ENCODE measurements at regions of chr3 and their contacts with region 1.

Region 1: DNA sequence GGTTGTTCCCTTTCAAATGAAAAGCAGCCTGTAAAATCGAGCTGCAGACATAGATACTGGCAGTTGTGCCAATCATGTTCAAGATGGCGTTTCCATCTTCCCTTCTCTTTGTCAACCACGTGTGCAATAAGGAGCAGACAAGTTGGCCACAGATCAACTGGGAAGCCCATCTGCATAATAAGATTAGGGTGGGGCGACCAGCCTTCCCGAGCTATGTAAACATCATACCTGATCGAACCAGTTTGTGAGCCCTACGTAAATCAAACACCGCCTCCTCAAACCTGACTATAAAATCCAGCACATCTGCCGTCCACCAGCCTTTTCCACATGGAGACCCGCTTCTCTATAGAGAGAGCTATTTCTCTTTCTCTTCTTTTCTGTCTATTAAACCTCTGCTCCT is 37.2 kb downstream of the TRIM42 start:
- DNase-seq: no peak
- H3K4me3 ChIP-seq: no peak overlapping the region
- H3K27ac ChIP-seq: no peak overlapping the region
- H3K4me1 ChIP-seq: peaks cover 3% of the 10 kb centered on the region
- H3K27me3 ChIP-seq: no peaks in the 10 kb centered on the region
- CTCF ChIP-seq: no peak

Region 2: DNA sequence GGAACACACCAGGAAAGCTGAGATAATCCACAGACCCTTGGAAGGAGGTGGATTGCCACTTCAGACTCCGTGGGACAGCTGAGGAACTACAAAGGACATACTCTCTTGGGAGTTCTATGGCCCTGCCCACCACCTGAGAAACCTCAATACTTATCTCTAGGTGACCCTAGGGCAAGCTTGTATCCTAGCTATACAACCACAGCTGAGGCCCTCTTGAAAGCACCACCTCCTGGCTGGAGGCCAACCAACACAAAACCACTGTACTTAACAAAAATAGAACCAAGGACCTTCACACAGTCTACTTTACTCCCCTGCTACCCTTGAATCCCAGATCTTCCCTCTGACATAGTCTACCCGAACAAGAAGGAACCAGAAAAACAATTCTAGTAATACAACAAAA is 97.9 kb before region 1 on chr3:
- CTCF ChIA-PET with region 1: no interaction called
- POLR2A ChIA-PET with region 1: no interaction called
- intact Hi-C with region 1: no loop called
- DNase-seq: no peak
- H3K4me3 ChIP-seq: no peak overlapping the region
- H3K27ac ChIP-seq: no peak overlapping the region
- H3K4me1 ChIP-seq: no peaks in the 10 kb centered on the region
- H3K27me3 ChIP-seq: no peaks in the 10 kb centered on the region
- CTCF ChIP-seq: no peak

Region 3: DNA sequence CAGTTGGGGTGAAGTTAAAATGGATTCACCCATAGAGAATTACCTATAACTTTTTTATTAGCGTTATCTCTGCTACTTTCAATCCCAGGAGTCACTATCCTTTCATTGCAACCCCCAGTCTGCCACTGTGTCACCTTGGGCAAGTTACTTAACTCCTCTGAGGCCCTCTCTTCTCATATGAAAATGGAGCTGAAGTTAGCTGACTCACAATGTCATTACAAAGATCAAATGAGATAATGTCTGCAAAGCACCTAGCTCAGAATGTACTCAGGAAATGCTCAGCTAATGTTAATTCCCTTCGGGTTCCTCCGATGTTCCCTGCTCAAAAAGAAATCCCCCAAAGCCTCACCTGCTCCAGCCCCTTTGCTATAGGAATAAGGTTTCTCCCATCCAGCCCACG is 12.9 kb after region 1 on chr3:
- CTCF ChIA-PET with region 1: no interaction called
- POLR2A ChIA-PET with region 1: interaction called, 17 read pairs
- intact Hi-C with region 1: no loop called
- DNase-seq: no peak
- H3K4me3 ChIP-seq: no peak overlapping the region
- H3K27ac ChIP-seq: no peak overlapping the region
- H3K4me1 ChIP-seq: no peaks in the 10 kb centered on the region
- H3K27me3 ChIP-seq: no peaks in the 10 kb centered on the region
- CTCF ChIP-seq: no peak

Measured in A673 (cell line).